ENCODE measurements at regions of chr4 and their contacts with region 1.

Region 1: DNA sequence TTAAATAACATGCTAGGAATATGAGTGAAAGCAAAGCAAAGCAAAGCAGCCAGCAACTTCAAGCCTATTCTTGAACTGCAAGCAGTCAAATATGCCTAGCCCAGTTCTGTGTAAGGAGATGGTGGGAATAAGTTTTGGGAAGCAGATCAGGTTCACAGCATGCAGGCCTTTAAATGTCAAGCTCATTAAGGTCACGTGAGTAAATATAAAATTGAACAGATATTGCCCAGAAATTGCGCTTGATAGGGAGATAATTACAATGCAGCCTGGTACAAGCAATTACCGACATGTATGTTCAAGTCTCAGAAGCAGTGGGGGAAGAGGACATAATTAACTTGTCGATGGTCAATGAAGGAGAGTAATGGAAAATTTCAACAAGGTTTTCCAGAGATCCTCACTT is 6.0 kb downstream of the GNPDA2 start:
- DNase-seq: no peak
- H3K4me3 ChIP-seq: no peak overlapping the region
- H3K27ac ChIP-seq: no peak overlapping the region
- H3K4me1 ChIP-seq: peaks cover 2 to 12% (median 8%) of the 10 kb centered on the region in 4 donors
- H3K27me3 ChIP-seq: no peaks in the 10 kb centered on the region
- CTCF ChIP-seq: no peak
- EP300 ChIP-seq: no peak
- POLR2A ChIP-seq: no peak

Region 2: GRCh38 chr4:44462259-44462658 is 258.1 kb before region 1 on chr4:
- in situ Hi-C with region 1: no loop called
- intact Hi-C with region 1: no loop called
- DNase-seq: no peak
- H3K4me3 ChIP-seq: no peak overlapping the region
- H3K27ac ChIP-seq: no peak overlapping the region
- H3K4me1 ChIP-seq: no peaks in the 10 kb centered on the region
- H3K27me3 ChIP-seq: no peaks in the 10 kb centered on the region
- CTCF ChIP-seq: no peak
- EP300 ChIP-seq: no peak
- POLR2A ChIP-seq: no peak

Region 3: GRCh38 chr4:46131498-46132057 is 1411.2 kb after region 1 on chr4:
- in situ Hi-C with region 1: no loop called
- intact Hi-C with region 1: loop called (anchors 5 kb)
- DNase-seq: no peak
- H3K4me3 ChIP-seq: no peak overlapping the region
- H3K27ac ChIP-seq: no peak overlapping the region
- H3K4me1 ChIP-seq: no peaks in the 10 kb centered on the region
- H3K27me3 ChIP-seq: no peaks in the 10 kb centered on the region
- CTCF ChIP-seq: no peak
- EP300 ChIP-seq: no peak
- POLR2A ChIP-seq: no peak